Naive thymus-derived CD8-positive, alpha-beta T cell (primary cell): ENCODE measurements at regions of chr3 and their contacts with region 1.

Region 1: DNA sequence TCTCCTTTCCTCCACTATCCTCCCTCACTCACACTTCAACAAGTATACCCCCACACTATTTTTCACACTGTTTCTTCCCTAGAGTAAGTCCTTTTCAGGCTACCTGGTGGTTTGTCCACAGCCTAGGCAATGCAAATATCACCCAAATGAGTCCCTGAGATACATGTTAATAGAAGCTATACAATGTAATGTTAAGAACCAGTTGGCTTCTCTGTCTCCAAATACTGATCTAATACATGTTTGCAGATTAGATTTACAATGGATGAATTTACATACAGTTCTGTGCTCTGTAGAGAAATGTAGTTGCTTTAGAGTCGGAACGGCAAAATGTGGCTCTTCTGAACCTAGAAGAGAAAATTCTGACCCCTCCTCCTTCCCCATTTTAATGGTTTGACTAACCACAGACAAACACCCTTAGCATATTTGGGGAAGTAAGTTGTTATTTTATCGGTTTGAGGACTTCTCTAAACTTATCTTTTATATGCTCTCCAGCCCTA is 63.6 kb upstream of the MBNL1 start:
- DNase-seq: peak in 2 of 10 donors; percentile 42 to 44
- ATAC-seq: peak; percentile 62 to 66
- H3K4me3 Mint-ChIP-seq: peak overlapping the region; percentile 55 to 96 (median 90)
- H3K27ac Mint-ChIP-seq: peak overlapping the region; percentile 40 to 99 (median 94)
- H3K4me1 Mint-ChIP-seq: peaks cover 25 to 86% (median 66%) of the 10 kb centered on the region in 4 donors
- H3K27me3 Mint-ChIP-seq: no peaks in the 10 kb centered on the region

Region 2: DNA sequence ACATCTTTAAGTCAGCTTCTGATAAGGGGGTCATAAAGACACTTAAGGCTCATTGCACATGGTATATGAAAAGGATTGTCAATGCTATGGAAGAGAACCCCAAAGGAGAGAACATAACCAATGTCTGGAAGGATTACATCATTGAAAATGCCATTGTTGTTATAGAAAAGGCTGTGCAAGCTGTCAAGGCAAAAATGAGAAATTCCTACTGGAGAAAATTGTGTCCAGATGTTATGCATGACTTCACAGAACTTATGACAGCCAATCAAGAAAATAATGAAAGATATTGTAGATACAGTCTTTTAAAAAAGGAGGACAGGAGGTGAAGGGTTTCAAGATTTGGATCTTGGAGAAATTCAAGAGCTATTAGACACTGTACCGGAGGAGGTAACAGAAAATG is 32.7 kb before region 1 on chr3:
- POLR2A ChIA-PET with region 1: no interaction called
- DNase-seq: no peak
- ATAC-seq: no peak
- H3K4me3 Mint-ChIP-seq: no peak overlapping the region
- H3K27ac Mint-ChIP-seq: no peak overlapping the region
- H3K4me1 Mint-ChIP-seq: peaks cover 0 to 2% (median under 1%) of the 10 kb centered on the region in 4 donors
- H3K27me3 Mint-ChIP-seq: no peaks in the 10 kb centered on the region

Region 3: DNA sequence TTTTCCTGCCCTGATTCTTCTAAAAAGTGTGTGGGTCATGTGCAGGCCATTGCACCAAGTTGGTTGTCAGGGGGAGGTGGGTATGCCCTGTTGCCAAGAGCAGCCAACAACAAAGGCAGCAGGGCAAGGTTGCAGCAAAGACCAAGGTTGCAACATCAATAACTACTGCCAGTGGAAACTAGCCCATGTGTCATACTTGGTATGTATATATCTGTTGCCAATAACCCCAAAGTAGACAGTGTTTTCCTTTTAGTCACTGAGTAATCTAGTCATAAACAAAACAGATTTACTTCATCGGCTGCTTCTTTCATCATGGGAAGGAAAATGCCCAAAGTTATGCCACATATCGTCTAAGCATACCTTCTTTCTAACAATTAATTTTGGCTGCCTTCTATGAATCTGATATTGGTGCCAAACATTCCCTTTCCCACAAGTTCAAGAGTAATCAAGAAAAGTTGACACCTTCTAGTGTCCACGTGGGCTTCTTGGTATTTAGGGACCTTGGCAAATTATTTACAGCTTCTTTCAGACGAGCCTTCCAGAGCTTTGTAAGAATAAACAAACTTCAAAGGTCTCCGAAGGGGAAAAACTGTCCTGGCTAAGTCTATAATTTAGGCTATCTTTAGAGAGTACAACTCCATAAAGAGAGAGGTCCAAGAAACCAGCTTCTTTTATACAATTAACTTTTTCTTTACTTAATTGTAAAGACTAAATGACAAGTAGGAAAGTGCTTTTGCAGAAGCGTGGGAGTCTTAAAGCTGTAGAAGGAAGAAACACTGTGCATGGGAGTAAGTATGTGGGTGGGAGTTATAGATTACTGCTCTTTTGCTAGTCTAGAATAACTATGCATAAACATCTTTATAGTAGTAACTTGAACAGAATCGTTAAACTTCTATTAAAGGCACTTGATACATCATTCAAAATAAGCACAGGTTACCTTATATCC is 53.6 kb after region 1 on chr3:
- POLR2A ChIA-PET with region 1: interaction called, 13 read pairs
- DNase-seq: peak in 9 of 10 donors; percentile 29 to 86 (median 59)
- ATAC-seq: peak; percentile 68 to 74
- H3K4me3 Mint-ChIP-seq: peak overlapping the region; percentile 60 to 88 (median 82)
- H3K27ac Mint-ChIP-seq: peak overlapping the region; percentile 93 to 99 (median 96)
- H3K4me1 Mint-ChIP-seq: peaks cover 33 to 88% (median 84%) of the 10 kb centered on the region in 4 donors
- H3K27me3 Mint-ChIP-seq: no peaks in the 10 kb centered on the region